Vagina (tissue), 2 donors: ENCODE measurements at regions of chr19 and their contacts with region 1.

Region 1: DNA sequence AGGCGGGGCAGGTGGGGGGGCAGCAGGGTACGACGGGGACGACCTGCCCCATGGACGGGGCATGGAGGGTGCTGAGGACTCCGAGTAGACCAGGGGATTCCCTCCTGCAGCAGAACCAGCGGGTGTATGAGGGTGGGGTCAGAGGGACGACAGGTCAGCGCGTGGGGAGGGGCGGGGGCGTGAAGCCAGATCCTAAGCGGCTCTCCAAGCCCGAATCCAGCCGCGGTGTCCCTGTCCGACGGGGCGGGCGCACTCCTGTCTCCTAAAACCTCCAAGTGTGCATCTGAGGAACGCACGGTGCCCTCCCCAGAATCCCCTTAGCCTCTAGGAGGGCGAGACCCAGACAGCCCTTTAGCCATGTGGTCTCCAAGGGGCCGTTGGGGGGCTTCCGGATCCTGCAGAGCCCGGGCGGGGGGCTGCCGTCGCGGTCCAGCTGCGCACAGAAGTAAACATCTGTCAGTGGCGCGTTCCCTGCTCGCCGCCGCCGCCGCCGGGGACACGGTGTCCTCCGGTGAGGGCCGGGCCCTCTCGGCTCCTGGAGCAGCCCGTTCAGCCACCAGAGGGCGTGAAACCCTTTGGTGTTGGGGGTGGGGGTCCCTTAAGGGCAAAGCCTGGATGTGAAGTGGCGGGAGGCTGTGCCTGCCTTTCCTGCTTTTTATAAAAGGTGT is 732 bp downstream of the NRTN start:
- DNase-seq: no peak
- H3K4me3 ChIP-seq: peak overlapping the region; percentile 30 to 37
- H3K27ac ChIP-seq: peak overlapping the region; percentile 56
- H3K4me1 ChIP-seq: peaks cover 26% of the 10 kb centered on the region
- H3K27me3 ChIP-seq: peaks cover 8% of the 10 kb centered on the region
- CTCF ChIP-seq: peak in 1 of 3 experiments; percentile 47
- POLR2A ChIP-seq: no peak

Region 2: DNA sequence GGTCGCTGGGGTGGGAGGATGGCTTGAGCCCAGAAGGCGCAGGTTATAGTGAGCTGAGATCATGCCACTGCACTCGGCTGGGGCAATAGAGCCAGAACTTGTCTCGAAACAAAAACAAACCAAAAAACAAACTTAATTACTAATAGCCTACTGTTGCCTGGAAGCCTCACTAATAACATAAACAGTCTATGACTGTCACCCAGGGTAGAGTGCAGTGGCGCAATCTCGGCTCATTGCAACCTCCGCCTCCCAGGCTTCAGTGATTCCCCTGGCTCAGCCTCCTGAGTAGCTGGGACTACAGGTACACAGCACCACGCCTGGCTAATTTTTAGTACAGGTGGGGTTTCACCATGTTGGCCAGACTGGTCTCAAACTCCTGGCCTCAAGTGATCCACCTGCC is 67.2 kb before region 1 on chr19:
- intact Hi-C with region 1: no loop called
- DNase-seq: no peak
- H3K4me3 ChIP-seq: no peak overlapping the region
- H3K27ac ChIP-seq: no peak overlapping the region
- H3K4me1 ChIP-seq: no peaks in the 10 kb centered on the region
- H3K27me3 ChIP-seq: no peaks in the 10 kb centered on the region
- CTCF ChIP-seq: no peak
- POLR2A ChIP-seq: no peak

Region 3: DNA sequence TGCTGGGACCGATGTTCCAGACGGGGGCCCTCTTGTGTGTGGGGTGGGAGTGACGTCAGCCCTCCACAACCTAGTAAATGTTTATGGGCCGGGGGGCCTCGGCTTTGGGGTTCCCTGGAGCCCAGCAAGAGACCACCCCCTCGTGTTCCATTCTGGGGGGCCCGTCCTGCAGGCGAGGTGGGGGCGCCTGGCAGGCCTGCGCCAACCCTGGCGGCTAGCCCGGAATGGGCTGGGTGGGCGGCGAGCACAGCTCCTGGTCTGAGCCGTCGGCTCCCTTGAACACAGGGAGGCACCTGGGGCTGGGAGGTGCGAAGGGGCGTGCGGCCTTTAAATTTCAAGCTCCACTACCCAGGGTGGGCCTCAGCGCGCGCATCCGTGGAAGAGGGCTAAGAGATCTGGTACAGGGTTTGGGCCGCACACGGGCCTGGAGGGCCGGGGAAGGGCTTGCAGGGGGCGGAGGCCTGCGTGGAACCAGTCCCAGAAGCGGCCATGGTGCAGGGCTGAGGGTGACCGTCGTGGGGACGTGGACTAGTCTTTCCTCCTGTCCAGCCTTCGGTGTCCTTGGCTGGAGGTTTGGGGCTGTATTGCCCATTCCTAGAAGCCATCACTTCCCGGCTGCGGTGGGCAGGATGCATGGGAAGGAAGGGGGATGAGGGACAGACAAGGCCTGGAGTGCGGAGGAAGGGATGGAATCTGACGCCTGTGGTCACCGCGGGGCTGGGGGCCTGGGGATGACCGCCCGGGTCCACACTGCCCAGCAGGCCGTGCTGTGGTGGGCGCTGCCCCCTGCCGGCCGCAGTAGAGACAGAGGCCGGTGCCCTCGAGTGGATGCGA is 86.6 kb after region 1 on chr19:
- intact Hi-C with region 1: loop called (anchors 5 kb)
- DNase-seq: no peak
- H3K4me3 ChIP-seq: no peak overlapping the region
- H3K27ac ChIP-seq: no peak overlapping the region
- H3K4me1 ChIP-seq: peaks cover 17% of the 10 kb centered on the region
- H3K27me3 ChIP-seq: no peaks in the 10 kb centered on the region
- CTCF ChIP-seq: peak in 2 of 3 experiments; percentile 14 to 45
- POLR2A ChIP-seq: no peak

Region 4: DNA sequence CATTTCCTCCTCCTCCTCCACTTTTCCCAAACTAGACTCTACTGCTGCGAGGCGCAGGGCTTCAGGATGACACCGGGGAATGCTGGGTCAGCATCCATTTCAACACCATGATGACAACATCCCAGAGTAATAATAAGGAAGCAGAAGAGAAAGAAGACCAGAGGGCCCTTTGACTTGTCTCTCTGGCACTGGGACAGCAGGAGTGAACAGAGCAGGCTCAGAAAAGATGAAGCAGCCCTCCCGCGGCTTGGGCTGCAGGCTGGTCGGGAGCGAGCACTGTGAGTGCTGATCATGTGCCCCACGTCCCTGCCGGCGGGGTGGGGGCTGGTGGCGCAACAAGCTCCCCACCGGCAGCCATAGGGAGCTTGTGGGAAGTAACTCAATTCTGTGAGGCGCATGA is 141.8 kb after region 1 on chr19:
- intact Hi-C with region 1: no loop called
- DNase-seq: peak in 1 of 2 donors; percentile 93
- H3K4me3 ChIP-seq: peak overlapping the region in 1 of 2 donors; percentile 15
- H3K27ac ChIP-seq: peak overlapping the region; percentile 56
- H3K4me1 ChIP-seq: peaks cover 59% of the 10 kb centered on the region
- H3K27me3 ChIP-seq: no peaks in the 10 kb centered on the region
- CTCF ChIP-seq: no peak
- POLR2A ChIP-seq: no peak